ENCODE measurements at regions of chrX and their contacts with region 1.

Region 1: DNA sequence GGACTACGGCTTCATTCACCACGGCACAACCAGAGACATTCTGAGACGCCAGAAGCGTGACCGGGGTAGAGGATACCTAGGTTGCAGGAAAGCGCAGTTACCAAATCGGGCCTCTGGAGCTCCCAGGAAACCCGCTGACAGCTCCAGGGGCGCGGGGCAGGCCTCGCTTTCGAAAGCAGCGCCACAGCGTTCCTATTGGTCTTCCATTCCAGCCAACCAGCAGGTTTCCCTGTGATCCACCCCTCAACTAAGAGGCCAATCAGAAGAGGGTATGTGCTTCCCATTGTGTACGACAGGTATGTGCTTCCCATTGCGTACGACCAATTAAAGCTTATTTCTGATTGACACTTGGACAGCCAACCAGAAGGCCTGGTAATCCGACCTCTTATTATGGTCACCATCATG is 14.9 kb downstream of the SNX12 start:
- DNase-seq: peak; percentile 68
- ATAC-seq: peak; percentile 100
- H3K4me3 ChIP-seq: peak overlapping the region; percentile 55; the same call in 1 of the 2 replicates
- H3K27ac ChIP-seq: peak overlapping the region; percentile 21; the same call in 1 of the 2 replicates
- H3K4me1 ChIP-seq: no peaks in the 10 kb centered on the region; the same call in 1 of the 2 replicates
- H3K27me3 ChIP-seq: no peaks in the 10 kb centered on the region
- CTCF ChIP-seq: no peak
- EP300 ChIP-seq: no peak
- POLR2A ChIP-seq: peak; percentile 58; the same call in 1 of the 2 replicates
- RAD21 ChIP-seq: no peak

Region 2: DNA sequence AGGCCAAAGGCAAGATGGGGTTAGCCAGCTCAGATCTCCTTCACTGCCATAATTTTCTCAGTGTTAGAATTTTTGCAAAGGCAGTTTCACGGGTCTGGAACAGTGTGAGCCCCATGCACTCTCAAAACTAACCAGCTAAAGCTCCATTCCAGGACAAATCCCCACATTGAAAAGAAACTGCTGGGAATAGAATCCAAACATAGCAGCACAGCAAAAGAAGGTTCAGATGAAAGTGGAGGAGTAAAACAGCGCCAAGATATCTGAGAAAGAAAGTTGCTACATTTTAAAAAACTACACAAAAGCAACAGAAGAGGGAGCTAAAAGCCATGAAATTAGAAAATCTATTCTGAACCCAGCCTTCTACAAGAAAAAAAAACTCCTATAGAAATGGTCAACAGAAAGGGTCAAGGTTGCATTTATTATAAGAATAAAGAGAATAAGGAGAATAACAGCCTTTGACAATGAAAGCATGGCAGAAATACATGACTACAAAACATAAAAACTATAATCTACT is 82.7 kb before region 1 on chrX:
- CTCF ChIA-PET with region 1: no interaction called
- POLR2A ChIA-PET with region 1: no interaction called
- RAD21 ChIA-PET with region 1: no interaction called
- SMC1A ChIA-PET with region 1: no interaction called
- in situ Hi-C with region 1: no loop called
- intact Hi-C with region 1: no loop called
- DNase-seq: no peak
- ATAC-seq: 0 out of 3 replicates have a peak, but pooled peaks have one; percentile 26
- H3K4me3 ChIP-seq: no peak overlapping the region
- H3K27ac ChIP-seq: no peak overlapping the region
- H3K4me1 ChIP-seq: no peaks in the 10 kb centered on the region
- H3K27me3 ChIP-seq: no peaks in the 10 kb centered on the region
- CTCF ChIP-seq: peak in 2 of 3 experiments; percentile 10 to 30; a peak in 1 of 6 replicates
- EP300 ChIP-seq: no peak
- POLR2A ChIP-seq: no peak
- RAD21 ChIP-seq: peak; percentile 50

Region 3: DNA sequence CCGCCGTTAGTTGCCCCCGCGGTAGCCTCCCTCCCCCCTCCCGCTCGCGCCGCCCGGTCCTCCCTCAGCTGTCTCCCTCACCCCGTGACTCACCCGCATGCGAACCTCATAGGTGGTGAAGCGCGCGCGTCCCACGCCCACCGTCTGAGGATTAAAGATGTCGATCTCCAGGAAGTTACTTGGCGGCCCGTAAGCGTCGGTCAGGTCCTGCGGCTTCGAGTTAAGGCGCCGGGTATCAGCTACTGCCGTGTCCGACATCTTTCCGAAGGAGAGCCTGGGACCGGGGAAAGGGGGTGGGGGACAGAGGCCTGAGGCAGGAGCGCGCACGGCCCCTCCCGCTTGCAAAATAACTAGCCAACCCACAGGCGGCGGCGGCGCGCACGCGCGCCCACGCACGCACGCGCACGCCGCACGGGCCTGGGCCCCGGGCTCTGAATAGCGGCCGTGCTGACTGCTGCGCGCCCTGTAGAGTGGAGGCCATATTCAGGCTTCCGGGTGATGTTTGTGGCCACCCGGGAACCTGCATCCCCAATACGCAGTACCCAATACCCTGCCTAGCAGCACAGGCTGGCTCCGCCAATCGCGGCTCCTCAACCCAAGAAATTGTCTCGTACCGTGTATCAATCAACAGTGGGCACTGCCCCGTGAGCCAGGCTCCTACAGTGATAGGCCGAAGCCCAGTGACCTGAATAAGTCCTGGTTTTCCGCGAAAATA is 15.0 kb after region 1 on chrX and contains the start of gene SNX12:
- CTCF ChIA-PET with region 1: interaction called, 3 read pairs
- POLR2A ChIA-PET with region 1: interaction called, 6 read pairs
- RAD21 ChIA-PET with region 1: interaction called, 3 read pairs
- SMC1A ChIA-PET with region 1: interaction called, 4 read pairs
- in situ Hi-C with region 1: no loop called
- intact Hi-C with region 1: loop called (anchors 1 kb)
- DNase-seq: peak; percentile 77
- ATAC-seq: peak; percentile 97
- H3K4me3 ChIP-seq: peak within 1 kb of the TSS; percentile 77
- H3K27ac ChIP-seq: peak within 1 kb of the TSS; percentile 78
- H3K4me1 ChIP-seq: no peaks in the 10 kb centered on the region
- H3K27me3 ChIP-seq: no peaks in the 10 kb centered on the region
- CTCF ChIP-seq: no peak
- EP300 ChIP-seq: no peak; a peak in 1 of 4 replicates
- POLR2A ChIP-seq: peak; percentile 69; the same call in 1 of the 2 replicates
- RAD21 ChIP-seq: no peak
- polyA plus RNA-seq, gene SNX12: 13.5 to 22.6 TPM

Region 4: GRCh38 chrX:71579136-71579989 is 526.1 kb after region 1 on chrX:
- CTCF ChIA-PET with region 1: no interaction called
- POLR2A ChIA-PET with region 1: no interaction called
- RAD21 ChIA-PET with region 1: no interaction called
- SMC1A ChIA-PET with region 1: no interaction called
- in situ Hi-C with region 1: no loop called
- intact Hi-C with region 1: no loop called
- DNase-seq: no peak
- ATAC-seq: no peak
- H3K4me3 ChIP-seq: no peak overlapping the region
- H3K27ac ChIP-seq: no peak overlapping the region
- H3K4me1 ChIP-seq: no peaks in the 10 kb centered on the region
- H3K27me3 ChIP-seq: no peaks in the 10 kb centered on the region
- CTCF ChIP-seq: no peak
- EP300 ChIP-seq: no peak
- POLR2A ChIP-seq: no peak
- RAD21 ChIP-seq: no peak

Measured in GM12878 (cell line).